PC-9 (cell line): ENCODE measurements at regions of chr18 and their contacts with region 1.

Region 1: GRCh38 chr18:23095463-23095862 is 39.8 kb upstream of the CABLES1 start:
- DNase-seq: no peak
- H3K4me3 ChIP-seq: no peak overlapping the region
- H3K27ac ChIP-seq: no peak overlapping the region
- H3K4me1 ChIP-seq: peaks cover 28% of the 10 kb centered on the region
- H3K27me3 ChIP-seq: no peaks in the 10 kb centered on the region
- CTCF ChIP-seq: no peak

Region 2: DNA sequence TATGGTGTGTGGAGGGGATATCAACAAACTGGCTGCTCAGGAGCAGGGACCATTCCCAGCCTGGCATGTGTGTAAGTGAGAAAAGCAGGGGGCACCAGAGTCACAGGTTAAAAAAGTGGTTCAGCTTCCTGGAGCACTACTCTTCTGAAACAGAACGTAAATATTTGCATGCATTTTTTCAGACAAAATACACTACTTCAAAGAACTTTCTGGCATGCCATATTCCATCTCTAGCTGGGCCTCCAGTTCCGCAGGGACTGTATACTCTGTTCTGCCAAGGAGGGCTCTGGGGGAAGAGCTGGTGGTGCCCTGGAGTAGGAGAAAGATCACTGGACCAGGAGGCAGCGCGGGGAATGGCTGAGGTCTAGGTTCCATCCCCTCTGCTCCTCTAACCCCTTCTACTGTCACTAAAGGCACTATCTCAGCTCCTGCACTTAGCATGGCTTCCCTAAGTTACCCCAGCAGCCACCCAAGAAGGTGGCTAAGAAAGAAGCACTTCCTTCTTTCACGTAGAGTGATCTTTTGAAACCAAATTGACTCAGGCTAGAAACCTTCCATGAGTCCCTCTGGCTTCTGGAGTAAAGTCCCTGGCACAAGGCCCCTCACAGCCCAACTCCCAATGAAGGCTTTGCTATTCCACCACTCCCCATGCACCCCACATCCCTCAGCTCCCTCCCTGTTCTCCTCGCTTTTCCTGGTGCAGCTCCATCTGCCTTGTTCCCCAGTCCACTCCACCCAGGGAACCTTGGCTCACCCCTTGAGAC is 17.8 kb before region 1 on chr18:
- CTCF ChIA-PET with region 1: interaction called, 10 read pairs
- POLR2A ChIA-PET with region 1: no interaction called
- intact Hi-C with region 1: no loop called
- DNase-seq: peak in 1 of 2 experiments; percentile 30
- H3K4me3 ChIP-seq: no peak overlapping the region
- H3K27ac ChIP-seq: no peak overlapping the region
- H3K4me1 ChIP-seq: peaks cover 6% of the 10 kb centered on the region; the same call in 1 of the 2 replicates
- H3K27me3 ChIP-seq: no peaks in the 10 kb centered on the region
- CTCF ChIP-seq: peak; percentile 43; the same call in 1 of the 2 replicates

Region 3: DNA sequence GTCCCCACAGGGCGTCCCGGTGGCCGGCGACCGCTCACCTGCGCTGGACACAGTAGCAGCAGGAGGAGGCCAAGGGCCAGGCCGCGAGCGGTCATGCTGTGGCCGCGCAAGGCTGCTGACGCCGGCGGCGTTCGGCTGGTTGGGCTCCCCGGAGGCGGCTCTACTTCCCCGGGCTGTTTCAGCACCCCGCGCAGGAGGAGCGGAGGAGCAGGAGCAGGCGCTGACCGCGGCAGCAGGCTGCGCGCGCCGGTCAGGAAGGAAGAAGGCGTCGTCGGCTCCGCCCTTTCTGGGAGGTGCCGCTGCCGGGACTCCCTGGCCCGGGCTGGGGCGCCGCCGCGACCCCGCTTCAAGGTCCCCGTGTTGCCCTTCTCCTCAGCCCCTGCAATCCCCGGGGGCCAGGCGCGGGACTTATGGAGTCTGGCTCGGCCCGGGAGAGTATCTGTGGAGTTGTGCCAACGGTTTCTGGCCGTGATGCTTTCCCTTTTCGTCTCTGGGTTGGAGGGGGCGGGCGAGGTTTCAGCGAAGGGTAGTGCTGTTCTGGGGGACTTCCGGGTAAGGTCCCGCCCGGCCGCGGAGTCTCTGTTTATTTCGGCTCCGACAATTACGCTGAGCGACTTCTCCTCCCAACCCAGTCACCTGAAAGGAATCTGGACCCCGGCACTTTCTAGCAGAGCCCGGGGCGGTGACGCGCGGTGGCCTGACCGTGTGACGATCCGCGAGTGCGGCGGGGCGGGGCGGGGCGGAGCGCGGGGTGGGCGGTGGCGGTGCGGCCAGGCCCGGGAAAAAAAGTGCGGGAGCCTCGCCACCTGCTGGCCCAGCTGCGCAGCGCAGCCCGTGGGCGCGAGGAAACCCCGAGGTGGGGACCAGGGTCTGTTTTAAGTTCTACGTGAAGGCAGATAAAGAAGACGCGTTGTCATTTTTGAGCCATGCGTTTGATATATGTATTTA is 491.1 kb after region 1 on chr18 and contains the start of gene NPC1:
- CTCF ChIA-PET with region 1: no interaction called
- POLR2A ChIA-PET with region 1: interaction called, 14 read pairs
- intact Hi-C with region 1: no loop called
- DNase-seq: peak; percentile 88 to 92
- H3K4me3 ChIP-seq: peak within 1 kb of the TSS; percentile 82
- H3K27ac ChIP-seq: peak within 1 kb of the TSS; percentile 97
- H3K4me1 ChIP-seq: peaks cover 19% of the 10 kb centered on the region
- H3K27me3 ChIP-seq: no peaks in the 10 kb centered on the region
- CTCF ChIP-seq: peak; percentile 75
- total RNA-seq, gene NPC1: 39.6 and 40.9 TPM in 2 replicates